Panc1 (cell line): ENCODE measurements at regions of chr3 and their contacts with region 1.

Region 1: GRCh38 chr3:134419214-134419959 is 45.1 kb upstream of the AMOTL2 start:
- DNase-seq: no peak
- ATAC-seq: 0 out of 2 replicates have a peak, but pooled peaks have one; percentile 36
- H3K4me3 ChIP-seq: no peak overlapping the region
- H3K27ac ChIP-seq: no peak overlapping the region
- H3K4me1 ChIP-seq: no peaks in the 10 kb centered on the region
- H3K27me3 ChIP-seq: no peaks in the 10 kb centered on the region; the same call in 1 of the 2 replicates
- CTCF ChIP-seq: no peak

Region 2: GRCh38 chr3:134392336-134392983 is 26.9 kb before region 1 on chr3:
- CTCF ChIA-PET with region 1: no interaction called
- POLR2A ChIA-PET with region 1: no interaction called
- in situ Hi-C with region 1: no loop called
- intact Hi-C with region 1: no loop called
- DNase-seq: no peak
- ATAC-seq: no peak
- H3K4me3 ChIP-seq: no peak overlapping the region
- H3K27ac ChIP-seq: no peak overlapping the region
- H3K4me1 ChIP-seq: no peaks in the 10 kb centered on the region
- H3K27me3 ChIP-seq: no peaks in the 10 kb centered on the region
- CTCF ChIP-seq: no peak

Region 3: DNA sequence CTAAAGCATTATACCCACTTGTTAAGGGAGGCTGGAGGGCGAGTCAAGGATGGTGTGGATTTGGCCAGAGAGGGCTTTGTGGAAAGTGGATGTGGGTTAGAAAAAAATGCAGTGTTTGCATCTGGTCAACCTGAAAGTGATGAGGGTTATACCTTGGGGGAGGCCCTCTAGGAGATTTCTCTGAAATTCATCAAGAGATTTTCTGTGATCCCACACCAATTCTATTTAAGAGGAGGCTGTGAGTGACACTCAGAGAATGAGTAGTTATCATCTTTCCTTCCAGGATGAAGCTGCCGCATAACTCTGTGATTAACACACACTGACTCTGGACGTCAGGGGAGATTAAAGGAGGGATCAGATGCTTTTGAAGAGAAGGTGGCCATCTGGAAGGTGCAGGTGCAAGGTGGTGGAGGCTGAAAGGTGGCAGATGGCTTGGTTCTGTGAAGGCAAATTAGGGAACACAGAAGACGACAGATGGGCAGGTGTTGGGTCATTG is 11.6 kb after region 1 on chr3:
- CTCF ChIA-PET with region 1: no interaction called
- POLR2A ChIA-PET with region 1: no interaction called
- in situ Hi-C with region 1: no loop called
- intact Hi-C with region 1: no loop called
- DNase-seq: no peak
- ATAC-seq: no peak
- H3K4me3 ChIP-seq: no peak overlapping the region
- H3K27ac ChIP-seq: no peak overlapping the region
- H3K4me1 ChIP-seq: peaks cover 9% of the 10 kb centered on the region
- H3K27me3 ChIP-seq: no peaks in the 10 kb centered on the region
- CTCF ChIP-seq: no peak

Region 4: GRCh38 chr3:134464064-134464697 is 44.8 kb after region 1 on chr3:
- CTCF ChIA-PET with region 1: no interaction called
- POLR2A ChIA-PET with region 1: interaction called, 11 read pairs
- in situ Hi-C with region 1: no loop called
- intact Hi-C with region 1: no loop called
- DNase-seq: no peak
- ATAC-seq: no peak
- H3K4me3 ChIP-seq: no peak overlapping the region
- H3K27ac ChIP-seq: no peak overlapping the region
- H3K4me1 ChIP-seq: no peaks in the 10 kb centered on the region
- H3K27me3 ChIP-seq: no peaks in the 10 kb centered on the region
- CTCF ChIP-seq: no peak

Region 5: DNA sequence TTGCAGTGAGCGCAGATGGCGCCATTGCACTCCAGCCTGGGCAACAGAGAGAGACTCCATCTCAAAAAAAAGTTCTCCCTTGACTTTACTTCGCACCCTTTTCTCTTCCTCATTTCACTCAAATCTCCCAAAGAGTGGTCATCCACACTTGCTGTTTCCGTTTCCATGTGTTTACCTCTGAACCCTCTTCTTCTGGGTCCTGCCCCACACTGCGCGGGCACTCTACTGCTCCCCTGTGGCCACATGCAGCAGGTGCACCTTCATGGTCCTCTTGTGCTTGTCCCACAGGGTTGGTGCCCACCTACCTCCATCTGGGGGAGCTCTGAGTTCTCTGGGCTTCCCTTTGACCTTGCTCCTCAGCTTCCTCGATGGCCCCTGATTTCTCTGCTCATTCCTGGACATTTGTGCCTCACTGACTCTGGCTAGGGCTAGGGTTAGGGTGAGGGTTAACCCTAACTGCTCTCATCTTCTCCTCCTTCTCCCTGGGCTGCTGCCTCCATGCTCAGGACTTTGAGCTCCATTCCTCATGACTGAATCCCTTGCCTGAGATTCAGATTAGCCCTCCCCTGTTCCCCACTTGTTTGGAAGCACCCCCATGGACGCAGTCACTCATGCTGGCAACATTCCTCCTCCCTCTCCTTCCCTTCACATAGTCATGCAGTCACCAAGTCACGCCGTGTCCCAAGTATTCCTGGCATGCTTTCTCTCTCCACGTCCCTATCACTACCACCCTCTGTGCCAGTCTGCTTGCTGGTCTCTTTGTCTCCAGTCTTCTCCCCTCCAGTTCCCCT is 258.0 kb after region 1 on chr3:
- CTCF ChIA-PET with region 1: no interaction called
- POLR2A ChIA-PET with region 1: no interaction called
- in situ Hi-C with region 1: no loop called
- intact Hi-C with region 1: no loop called
- DNase-seq: no peak
- ATAC-seq: peak; percentile 70
- H3K4me3 ChIP-seq: no peak overlapping the region
- H3K27ac ChIP-seq: no peak overlapping the region
- H3K4me1 ChIP-seq: no peaks in the 10 kb centered on the region
- H3K27me3 ChIP-seq: no peaks in the 10 kb centered on the region; the same call in 1 of the 2 replicates
- CTCF ChIP-seq: peak; percentile 75